Activated B cell treated with CpG ODN at 0.5 μM for 24 hours (primary cell): ENCODE measurements at regions of chr9 and their contacts with region 1.

Region 1: GRCh38 chr9:136245219-136246150 is at the start of gene QSOX2:
- DNase-seq: peak; percentile 83
- ATAC-seq: peak; percentile 70
- H3K4me3 Mint-ChIP-seq: peak within 1 kb of the TSS; percentile 95
- H3K27ac Mint-ChIP-seq: peak within 1 kb of the TSS; percentile 92
- H3K4me1 Mint-ChIP-seq: peaks cover 52% of the 10 kb centered on the region
- H3K27me3 Mint-ChIP-seq: no peaks in the 10 kb centered on the region
- CTCF ChIP-seq: no peak
- total RNA-seq, gene QSOX2: 43.3 and 49.1 TPM in 2 replicates

Region 2: DNA sequence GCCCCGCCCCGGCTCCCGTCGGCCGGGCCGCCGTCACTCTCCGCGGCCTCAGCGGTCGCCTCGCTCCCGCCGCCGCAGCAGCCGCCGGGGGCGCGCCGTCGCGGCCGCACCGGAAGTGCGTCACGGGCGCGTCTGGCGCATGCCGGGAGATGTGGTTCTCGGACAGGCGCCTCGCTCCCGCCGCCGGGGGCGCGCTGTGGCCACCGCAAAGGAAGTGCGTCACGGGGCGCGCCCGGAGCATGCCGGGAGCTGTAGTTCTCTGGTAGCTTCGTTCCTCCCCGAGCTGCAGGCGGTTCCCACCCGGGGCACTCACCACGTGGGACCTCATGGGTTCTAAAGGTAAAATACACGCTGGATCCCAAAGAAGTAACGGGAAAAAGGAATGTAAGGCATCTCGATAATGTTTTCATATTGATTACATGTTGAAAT is 284.2 kb before region 1 on chr9 and contains the start of gene UBAC1:
- CTCF ChIA-PET with region 1: no interaction called
- POLR2A ChIA-PET with region 1: no interaction called
- intact Hi-C with region 1: loop called (anchors 2 kb)
- DNase-seq: peak; percentile 99
- ATAC-seq: peak; percentile 91
- H3K4me3 Mint-ChIP-seq: peak within 1 kb of the TSS; percentile 87
- H3K27ac Mint-ChIP-seq: peak within 1 kb of the TSS; percentile 76
- H3K4me1 Mint-ChIP-seq: peaks cover 29% of the 10 kb centered on the region
- H3K27me3 Mint-ChIP-seq: peaks cover 9% of the 10 kb centered on the region
- CTCF ChIP-seq: no peak
- total RNA-seq, gene UBAC1: 24.3 and 25.5 TPM in 2 replicates

Region 3: GRCh38 chr9:136170006-136170901 is 75.2 kb before region 1 on chr9:
- CTCF ChIA-PET with region 1: interaction called, 18 read pairs
- POLR2A ChIA-PET with region 1: interaction called, 10 read pairs
- intact Hi-C with region 1: loop called (anchors 1 kb)
- DNase-seq: peak; percentile 70
- ATAC-seq: peak; percentile 99
- H3K4me3 Mint-ChIP-seq: no peak overlapping the region
- H3K27ac Mint-ChIP-seq: no peak overlapping the region
- H3K4me1 Mint-ChIP-seq: peaks cover 6% of the 10 kb centered on the region
- H3K27me3 Mint-ChIP-seq: peaks cover 16% of the 10 kb centered on the region
- CTCF ChIP-seq: peak; percentile 33

Region 4: GRCh38 chr9:136204838-136205706 is 40.4 kb before region 1 on chr9 and contains the start of gene LHX3:
- CTCF ChIA-PET with region 1: no interaction called
- POLR2A ChIA-PET with region 1: interaction called, 5 read pairs
- intact Hi-C with region 1: loop called (anchors 5 kb)
- DNase-seq: no peak
- ATAC-seq: peak; percentile 41
- H3K4me3 Mint-ChIP-seq: no peak within 1 kb of the TSS
- H3K27ac Mint-ChIP-seq: no peak within 1 kb of the TSS
- H3K4me1 Mint-ChIP-seq: peaks cover 13% of the 10 kb centered on the region
- H3K27me3 Mint-ChIP-seq: peaks cover 18% of the 10 kb centered on the region
- CTCF ChIP-seq: no peak
- total RNA-seq, gene LHX3: 0.17 TPM in 1 of 2 replicates, not detected in the other

Region 5: DNA sequence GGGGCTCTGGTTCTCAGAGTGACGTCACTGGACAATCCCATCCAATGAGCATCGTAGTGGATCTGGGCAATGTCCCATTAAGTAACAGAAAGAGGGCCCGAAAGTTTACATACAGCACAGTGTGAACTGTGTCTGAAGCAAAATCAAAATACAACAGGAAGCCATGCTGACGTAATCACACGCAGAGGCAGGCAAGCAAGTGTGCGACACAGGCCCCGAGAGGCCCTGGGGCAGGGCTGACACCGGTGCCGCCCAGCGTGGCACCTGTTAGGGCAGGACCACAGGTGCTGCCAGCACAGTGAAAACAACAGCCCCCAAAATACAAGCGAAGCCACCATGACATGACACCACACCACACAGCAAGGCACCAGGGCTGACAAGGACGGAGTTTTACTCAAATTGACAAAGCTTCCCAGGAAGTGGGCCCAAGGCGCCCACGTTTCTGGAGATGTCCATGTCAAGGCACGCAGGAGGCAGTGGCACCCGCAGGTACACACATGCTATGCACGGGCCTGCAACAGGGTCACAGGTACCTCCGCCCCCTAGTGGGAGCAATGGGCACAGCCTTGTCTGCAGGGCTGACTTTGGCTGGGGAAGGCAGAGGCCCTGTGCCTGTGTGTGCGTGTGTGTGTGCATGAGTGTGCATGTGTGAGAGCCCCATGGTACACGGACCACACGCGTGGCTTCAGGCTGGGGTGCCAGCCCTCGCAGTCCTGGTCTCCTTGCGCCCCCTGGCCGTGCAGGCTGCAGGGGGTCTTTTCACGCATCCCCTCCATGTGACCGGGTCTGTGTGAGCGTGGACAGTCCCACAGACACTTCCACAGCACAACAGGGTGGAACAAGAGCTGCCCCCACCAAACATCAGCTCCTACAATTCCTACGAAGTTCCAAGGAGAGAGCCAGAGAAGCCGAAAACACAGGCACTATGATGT is 19.5 kb before region 1 on chr9:
- CTCF ChIA-PET with region 1: interaction called, 39 read pairs
- POLR2A ChIA-PET with region 1: interaction called, 60 read pairs
- intact Hi-C with region 1: loop called (anchors 1 kb)
- DNase-seq: peak; percentile 70
- ATAC-seq: peak; percentile 78
- H3K4me3 Mint-ChIP-seq: peak overlapping the region; percentile 79
- H3K27ac Mint-ChIP-seq: peak overlapping the region; percentile 98
- H3K4me1 Mint-ChIP-seq: peaks cover 80% of the 10 kb centered on the region
- H3K27me3 Mint-ChIP-seq: no peaks in the 10 kb centered on the region
- CTCF ChIP-seq: peak; percentile 30

Region 6: GRCh38 chr9:136267261-136268111 is 22.0 kb after region 1 on chr9:
- CTCF ChIA-PET with region 1: interaction called, 8 read pairs
- POLR2A ChIA-PET with region 1: interaction called, 10 read pairs
- intact Hi-C with region 1: loop called (anchors 1 kb)
- DNase-seq: peak; percentile 72
- ATAC-seq: peak; percentile 97
- H3K4me3 Mint-ChIP-seq: peak overlapping the region; percentile 80
- H3K27ac Mint-ChIP-seq: peak overlapping the region; percentile 70
- H3K4me1 Mint-ChIP-seq: peaks cover 11% of the 10 kb centered on the region
- H3K27me3 Mint-ChIP-seq: no peaks in the 10 kb centered on the region
- CTCF ChIP-seq: no peak

Region 7: DNA sequence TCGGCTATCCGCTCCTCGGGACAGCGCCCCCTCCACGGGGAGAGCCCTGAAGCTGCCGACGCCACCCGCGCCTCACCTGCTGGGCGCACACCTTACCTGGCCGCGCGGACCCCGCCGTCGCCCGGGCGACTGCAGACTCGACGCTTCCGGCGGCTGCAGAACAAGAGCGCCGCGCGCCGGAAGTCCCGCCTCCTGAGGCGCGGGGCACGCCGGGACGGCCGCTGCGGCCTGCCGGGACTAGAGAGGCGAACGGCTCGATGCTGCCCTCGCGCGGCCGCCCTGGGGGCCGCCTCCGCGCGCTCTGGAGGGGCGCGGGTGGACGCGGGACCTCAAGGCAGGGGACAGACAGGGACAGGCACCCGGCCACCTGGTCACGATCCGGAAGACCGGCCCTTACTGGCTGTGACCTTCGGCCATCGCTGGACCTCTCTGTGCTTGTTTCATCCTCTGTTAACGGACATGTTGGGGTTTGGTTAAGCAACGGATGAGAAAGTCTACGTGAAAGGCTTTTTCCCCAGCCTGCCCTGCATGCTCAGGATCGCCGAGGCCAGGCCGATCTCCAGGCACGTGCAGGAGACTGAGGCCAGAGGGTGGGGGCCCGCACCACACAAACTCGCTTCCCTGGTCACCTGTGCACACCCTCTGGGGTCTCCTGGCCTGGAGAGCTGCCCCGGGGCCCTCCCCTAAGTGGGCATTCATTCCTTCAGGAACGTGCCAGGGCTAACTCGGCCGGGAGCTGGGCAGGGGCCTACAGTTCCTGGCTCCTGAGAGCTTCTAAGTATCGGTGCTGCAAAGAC is 154.8 kb after region 1 on chr9 and contains the start of gene SNAPC4:
- CTCF ChIA-PET with region 1: no interaction called
- POLR2A ChIA-PET with region 1: no interaction called
- intact Hi-C with region 1: loop called (anchors 10 kb)
- DNase-seq: peak; percentile 88
- ATAC-seq: peak; percentile 76
- H3K4me3 Mint-ChIP-seq: peak within 1 kb of the TSS; percentile 87
- H3K27ac Mint-ChIP-seq: peak within 1 kb of the TSS; percentile 46
- H3K4me1 Mint-ChIP-seq: peaks cover 48% of the 10 kb centered on the region
- H3K27me3 Mint-ChIP-seq: no peaks in the 10 kb centered on the region
- CTCF ChIP-seq: peak; percentile 21
- total RNA-seq, gene SNAPC4: 20.0 and 22.2 TPM in 2 replicates